Prostate gland (tissue), 2 donors: ENCODE measurements at regions of chr4 and their contacts with region 1.

Region 1: GRCh38 chr4:163554870-163555465 is 60.5 kb downstream of the TMA16 start:
- DNase-seq: no peak
- H3K4me3 ChIP-seq: no peak overlapping the region
- H3K27ac ChIP-seq: no peak overlapping the region
- H3K4me1 ChIP-seq: no peaks in the 10 kb centered on the region
- H3K27me3 ChIP-seq: no peaks in the 10 kb centered on the region
- CTCF ChIP-seq: peak; percentile 29 to 56 (median 54)
- POLR2A ChIP-seq: no peak

Region 2: DNA sequence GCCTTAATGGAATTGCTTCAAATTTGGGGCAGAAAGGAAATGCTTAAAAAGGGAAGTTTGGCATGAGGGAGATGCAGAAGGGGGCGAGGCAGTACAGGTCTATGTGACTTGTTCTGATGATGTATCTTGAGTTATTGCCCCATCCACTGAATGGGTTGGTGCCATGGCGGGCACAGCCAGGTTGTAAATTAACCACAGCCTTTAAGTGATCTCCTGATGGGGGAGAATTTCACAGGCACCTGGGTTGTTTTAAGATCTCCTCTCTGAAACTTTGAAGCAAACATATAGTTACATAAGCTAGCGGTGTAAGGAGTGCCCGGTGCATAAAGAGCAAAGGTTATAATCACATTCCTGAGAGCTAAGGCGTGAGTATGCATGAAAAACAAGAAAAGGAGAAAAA is 174.3 kb before region 1 on chr4:
- intact Hi-C with region 1: no loop called
- DNase-seq: no peak
- H3K4me3 ChIP-seq: no peak overlapping the region
- H3K27ac ChIP-seq: no peak overlapping the region
- H3K4me1 ChIP-seq: no peaks in the 10 kb centered on the region
- H3K27me3 ChIP-seq: no peaks in the 10 kb centered on the region
- CTCF ChIP-seq: no peak
- POLR2A ChIP-seq: no peak

Region 3: DNA sequence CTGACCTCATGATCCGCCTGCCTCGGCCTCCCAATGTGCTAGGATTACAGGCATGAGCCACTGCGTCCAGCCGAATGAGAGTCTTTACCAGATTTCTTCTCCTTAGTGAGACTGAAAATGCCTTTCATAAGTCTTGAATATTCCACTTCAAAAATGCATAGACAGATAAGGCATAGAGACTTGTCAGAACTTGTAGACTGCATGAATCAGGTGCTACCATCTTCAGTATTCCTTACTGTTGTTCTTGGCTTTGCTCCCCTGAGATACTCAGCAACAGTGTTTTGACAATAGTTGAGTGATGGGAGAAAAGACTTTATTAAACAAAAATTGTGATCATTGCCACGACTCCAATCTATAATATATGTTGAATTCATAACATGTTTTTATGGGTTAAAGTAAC is 92.4 kb before region 1 on chr4:
- intact Hi-C with region 1: no loop called
- DNase-seq: no peak
- H3K4me3 ChIP-seq: no peak overlapping the region
- H3K27ac ChIP-seq: no peak overlapping the region
- H3K4me1 ChIP-seq: no peaks in the 10 kb centered on the region
- H3K27me3 ChIP-seq: no peaks in the 10 kb centered on the region
- CTCF ChIP-seq: no peak
- POLR2A ChIP-seq: no peak

Region 4: DNA sequence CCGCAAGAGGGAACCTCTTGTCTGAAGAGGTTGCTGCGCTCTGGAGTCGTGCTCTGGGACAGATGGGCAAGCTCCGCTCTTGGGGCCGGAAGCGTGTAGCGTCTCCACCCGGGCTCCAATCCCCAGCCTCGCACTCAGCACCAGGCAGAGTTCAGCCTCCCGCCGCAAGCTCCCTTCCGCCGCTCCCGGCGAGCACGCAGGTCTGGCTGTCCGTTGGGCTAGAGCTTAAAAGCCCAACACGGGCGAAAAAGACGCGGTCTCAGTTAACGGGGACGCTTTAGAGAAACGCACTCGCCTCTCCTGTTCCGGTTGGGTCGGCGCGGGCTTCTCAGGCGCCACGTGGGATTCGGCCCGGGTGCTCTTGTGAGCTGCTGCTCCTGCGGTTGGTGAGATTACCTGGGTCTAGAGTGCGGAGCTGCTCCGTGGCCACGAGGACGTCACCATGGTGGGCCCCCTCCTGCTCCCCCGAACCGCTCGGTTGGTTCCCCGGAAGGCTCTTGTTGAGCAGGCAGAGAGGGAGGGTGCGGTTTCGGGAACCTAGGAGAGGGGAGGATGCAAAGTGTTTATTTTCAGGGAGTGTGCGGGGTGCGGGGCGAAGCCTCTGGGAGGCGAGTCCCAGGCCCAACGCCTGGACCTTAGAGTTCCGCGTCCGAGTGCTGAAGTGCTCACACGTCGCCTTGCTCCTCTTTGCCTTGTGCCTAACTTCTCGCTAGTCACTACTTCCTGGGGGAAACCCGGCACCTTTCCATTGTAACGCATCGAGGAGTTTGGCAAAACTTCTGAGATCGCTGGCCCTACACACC is 60.4 kb before region 1 on chr4 and contains the start of gene TMA16:
- intact Hi-C with region 1: no loop called
- DNase-seq: peak; percentile 66
- H3K4me3 ChIP-seq: peak within 1 kb of the TSS; percentile 51 to 64
- H3K27ac ChIP-seq: peak within 1 kb of the TSS; percentile 77
- H3K4me1 ChIP-seq: no peaks in the 10 kb centered on the region
- H3K27me3 ChIP-seq: no peaks in the 10 kb centered on the region
- CTCF ChIP-seq: peak in 1 of 4 experiments; percentile 18
- POLR2A ChIP-seq: peak; percentile 39
- total RNA-seq, gene TMA16: 12.9 to 17.3 TPM

Region 5: DNA sequence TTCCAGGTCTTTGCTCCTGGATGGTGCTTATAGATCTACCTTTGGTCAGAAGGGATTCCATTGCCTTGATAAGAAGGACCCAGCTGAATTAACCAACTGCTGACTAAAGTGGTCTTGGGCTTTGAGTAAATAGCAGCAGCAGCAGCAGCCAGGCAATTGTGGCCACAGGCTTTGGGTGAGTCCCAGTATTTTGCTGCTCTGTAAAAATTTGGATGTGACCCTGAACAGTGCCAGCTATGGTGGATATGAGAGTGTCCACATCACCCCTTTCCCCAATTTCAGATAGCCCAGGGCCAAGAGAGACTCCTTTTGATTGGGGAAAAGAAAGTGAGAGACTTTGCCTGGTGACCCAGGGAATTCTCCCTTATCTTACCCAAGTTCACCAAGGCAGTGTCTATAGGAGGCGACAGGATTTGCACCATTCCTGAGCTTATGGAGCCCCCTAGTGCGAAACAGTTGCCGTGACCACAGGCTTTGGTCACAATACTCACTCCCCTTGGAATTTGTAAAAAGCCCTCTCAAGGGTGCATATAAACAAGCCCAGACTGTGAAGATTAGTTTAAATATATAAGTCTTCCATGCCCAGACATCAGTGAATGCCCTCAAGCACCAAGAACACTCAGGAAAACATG is 457.5 kb after region 1 on chr4:
- intact Hi-C with region 1: loop called (anchors 10 kb)
- DNase-seq: no peak
- H3K4me3 ChIP-seq: no peak overlapping the region
- H3K27ac ChIP-seq: no peak overlapping the region
- H3K4me1 ChIP-seq: no peaks in the 10 kb centered on the region
- H3K27me3 ChIP-seq: no peaks in the 10 kb centered on the region
- CTCF ChIP-seq: peak in 2 of 4 experiments; percentile 6 to 39
- POLR2A ChIP-seq: no peak